PC-9 (cell line): ENCODE measurements at regions of chr11 and their contacts with region 1.

Region 1: GRCh38 chr11:62665075-62665598 is at the starts of genes C11orf98 and CSKMT:
- DNase-seq: peak; percentile 87 to 98
- H3K4me3 ChIP-seq: peak within 1 kb of the TSS; percentile 88
- H3K27ac ChIP-seq: peak within 1 kb of the TSS; percentile 72
- H3K4me1 ChIP-seq: peaks cover 33% of the 10 kb centered on the region
- H3K27me3 ChIP-seq: no peaks in the 10 kb centered on the region
- CTCF ChIP-seq: no peak
- total RNA-seq, gene C11orf98: 86.7 and 94.9 TPM in 2 replicates
- total RNA-seq, gene CSKMT: 19.2 and 51.9 TPM in 2 replicates

Region 2: GRCh38 chr11:62479631-62480201 is 185.4 kb before region 1 on chr11:
- CTCF ChIA-PET with region 1: interaction called, 3 read pairs
- POLR2A ChIA-PET with region 1: interaction called, 50 read pairs
- intact Hi-C with region 1: no loop called
- DNase-seq: no peak
- H3K4me3 ChIP-seq: peak overlapping the region; percentile 36; the same call in 1 of the 2 replicates
- H3K27ac ChIP-seq: peak overlapping the region; percentile 95
- H3K4me1 ChIP-seq: peaks cover 42% of the 10 kb centered on the region
- H3K27me3 ChIP-seq: no peaks in the 10 kb centered on the region
- CTCF ChIP-seq: no peak

Region 3: GRCh38 chr11:62591448-62592145 is 73.5 kb before region 1 on chr11 and contains the start of gene TUT1:
- CTCF ChIA-PET with region 1: interaction called, 3 read pairs
- POLR2A ChIA-PET with region 1: interaction called, 55 read pairs
- intact Hi-C with region 1: loop called (anchors 5 kb)
- DNase-seq: peak; percentile 98 to 100
- H3K4me3 ChIP-seq: peak within 1 kb of the TSS; percentile 84
- H3K27ac ChIP-seq: peak within 1 kb of the TSS; percentile 61
- H3K4me1 ChIP-seq: peaks cover 29% of the 10 kb centered on the region
- H3K27me3 ChIP-seq: no peaks in the 10 kb centered on the region
- CTCF ChIP-seq: no peak
- total RNA-seq, gene TUT1: 39.3 and 40.5 TPM in 2 replicates

Region 4: DNA sequence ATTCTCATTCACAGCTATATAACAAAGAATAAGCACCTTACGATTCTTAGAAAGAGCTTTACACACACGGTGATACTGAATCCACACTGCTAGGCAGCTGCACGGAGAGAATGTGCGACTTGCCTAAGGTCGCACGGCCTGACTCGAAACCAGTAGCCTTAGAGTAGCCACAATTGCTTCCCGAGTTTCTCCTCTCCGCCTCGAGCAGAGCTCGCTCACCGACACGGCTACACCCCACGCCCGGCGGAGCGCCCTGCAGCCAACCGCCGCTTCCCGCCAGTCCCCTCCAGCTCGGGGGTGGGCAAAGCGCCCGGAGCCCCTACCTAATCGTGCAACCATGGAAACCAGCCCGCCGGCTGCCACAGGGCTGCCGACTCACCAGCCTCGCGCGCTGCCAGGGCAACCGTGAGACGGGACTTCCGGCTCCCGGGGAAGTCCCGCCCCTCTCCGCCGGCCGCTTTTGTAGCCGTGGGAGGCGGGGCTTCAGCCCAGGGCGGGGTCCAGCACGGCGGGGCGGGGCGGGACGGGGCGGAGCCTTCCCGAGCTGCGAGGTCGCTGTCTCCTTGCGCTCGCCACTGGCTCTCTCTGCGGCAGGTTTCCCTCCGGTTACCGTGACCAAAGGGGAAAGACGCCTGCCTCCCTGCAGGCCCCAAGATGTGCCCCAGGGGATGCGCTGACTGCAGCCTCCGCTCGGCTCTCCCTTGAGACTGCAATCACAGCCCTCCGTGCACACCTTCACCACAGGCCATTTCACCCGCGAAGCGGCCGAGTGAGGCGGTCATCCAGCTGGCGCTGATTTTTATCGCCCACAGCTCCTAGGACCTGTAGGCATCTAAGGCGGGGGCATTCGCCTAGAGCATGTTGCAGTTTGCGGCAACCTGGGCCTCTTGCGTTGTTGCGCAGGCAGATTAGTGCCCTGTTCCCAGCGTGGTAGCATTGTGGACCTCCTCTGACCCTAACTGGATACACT is 41.0 kb after region 1 on chr11:
- CTCF ChIA-PET with region 1: no interaction called
- POLR2A ChIA-PET with region 1: interaction called, 15 read pairs
- intact Hi-C with region 1: no loop called
- DNase-seq: peak; percentile 82 to 96
- H3K4me3 ChIP-seq: peak overlapping the region; percentile 89
- H3K27ac ChIP-seq: peak overlapping the region; percentile 79
- H3K4me1 ChIP-seq: peaks cover 30% of the 10 kb centered on the region
- H3K27me3 ChIP-seq: no peaks in the 10 kb centered on the region
- CTCF ChIP-seq: no peak

Region 5: GRCh38 chr11:62831520-62832335 is 166.6 kb after region 1 on chr11 and contains the start of gene STX5:
- CTCF ChIA-PET with region 1: no interaction called
- POLR2A ChIA-PET with region 1: interaction called, 11 read pairs
- intact Hi-C with region 1: no loop called
- DNase-seq: peak; percentile 96 to 99
- H3K4me3 ChIP-seq: peak within 1 kb of the TSS; percentile 100
- H3K27ac ChIP-seq: peak within 1 kb of the TSS; percentile 77
- H3K4me1 ChIP-seq: peaks cover 22% of the 10 kb centered on the region
- H3K27me3 ChIP-seq: no peaks in the 10 kb centered on the region
- CTCF ChIP-seq: no peak
- total RNA-seq, gene STX5: 61.9 and 65.8 TPM in 2 replicates

Region 6: GRCh38 chr11:62855571-62856332 is 190.6 kb after region 1 on chr11:
- CTCF ChIA-PET with region 1: interaction called, 5 read pairs
- POLR2A ChIA-PET with region 1: interaction called, 10 read pairs
- intact Hi-C with region 1: no loop called
- DNase-seq: peak; percentile 98 to 99
- H3K4me3 ChIP-seq: peak overlapping the region; percentile 97
- H3K27ac ChIP-seq: peak overlapping the region; percentile 85
- H3K4me1 ChIP-seq: peaks cover 37% of the 10 kb centered on the region
- H3K27me3 ChIP-seq: no peaks in the 10 kb centered on the region
- CTCF ChIP-seq: no peak

Region 7: DNA sequence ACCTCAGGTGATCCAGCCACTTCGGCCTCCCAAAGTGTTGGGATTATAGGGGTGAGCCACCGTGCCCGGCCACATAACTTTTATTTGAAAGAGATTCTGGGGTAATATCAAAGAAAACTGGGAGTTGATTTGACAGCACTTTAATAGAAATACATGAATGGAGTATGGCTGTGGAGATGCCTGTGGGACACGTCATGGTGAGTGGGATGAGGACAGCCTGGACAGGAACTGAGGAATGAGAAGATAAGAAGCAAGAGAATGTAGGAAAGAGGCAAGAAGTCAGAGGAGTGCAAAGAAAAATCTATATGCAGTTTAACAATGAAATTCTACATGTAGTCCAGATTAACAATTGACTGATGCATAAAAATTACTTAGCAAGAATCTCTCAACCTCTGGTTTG is 288.7 kb after region 1 on chr11:
- CTCF ChIA-PET with region 1: no interaction called
- POLR2A ChIA-PET with region 1: no interaction called
- intact Hi-C with region 1: no loop called
- DNase-seq: no peak
- H3K4me3 ChIP-seq: no peak overlapping the region
- H3K27ac ChIP-seq: no peak overlapping the region
- H3K4me1 ChIP-seq: no peaks in the 10 kb centered on the region
- H3K27me3 ChIP-seq: peaks cover 79% of the 10 kb centered on the region
- CTCF ChIP-seq: no peak

Region 8: DNA sequence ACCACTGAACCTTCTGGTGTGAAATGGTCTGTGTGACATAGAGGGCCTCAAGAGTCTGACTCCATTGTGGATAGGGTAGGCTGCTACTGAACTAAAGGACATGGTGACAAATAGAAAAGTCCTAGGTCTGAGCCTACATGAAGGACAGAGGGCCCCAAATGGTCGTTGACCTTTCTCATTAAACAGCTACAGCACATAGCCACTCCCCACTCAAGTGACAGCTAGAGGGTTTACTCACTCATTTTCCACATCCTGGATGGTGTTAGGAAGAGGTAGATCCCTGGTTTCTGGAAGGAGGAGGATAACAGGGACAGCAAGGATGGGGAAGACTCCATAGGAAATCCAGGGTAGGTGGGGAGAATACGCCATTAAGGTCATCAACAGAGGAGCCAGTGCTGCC is 415.5 kb after region 1 on chr11:
- CTCF ChIA-PET with region 1: no interaction called
- POLR2A ChIA-PET with region 1: no interaction called
- intact Hi-C with region 1: no loop called
- DNase-seq: no peak
- H3K4me3 ChIP-seq: no peak overlapping the region
- H3K27ac ChIP-seq: no peak overlapping the region
- H3K4me1 ChIP-seq: no peaks in the 10 kb centered on the region
- H3K27me3 ChIP-seq: peaks cover 35% of the 10 kb centered on the region; the same call in 1 of the 2 replicates
- CTCF ChIP-seq: no peak